ENCODE measurements at regions of chr10 and their contacts with region 1.

Region 1: GRCh38 chr10:21278491-21279239 is 246.8 kb downstream of the SKIDA1 start:
- DNase-seq: peak in 1 of 2 donors; percentile 91
- H3K4me3 ChIP-seq: no peak overlapping the region
- H3K27ac ChIP-seq: no peak overlapping the region
- H3K4me1 ChIP-seq: no peaks in the 10 kb centered on the region
- H3K27me3 ChIP-seq: no peaks in the 10 kb centered on the region
- CTCF ChIP-seq: peak; percentile 35 to 78 (median 69)
- POLR2A ChIP-seq: no peak

Region 2: GRCh38 chr10:20858292-20859124 is 420.2 kb before region 1 on chr10:
- intact Hi-C with region 1: loop called (anchors 10 kb)
- DNase-seq: no peak
- H3K4me3 ChIP-seq: no peak overlapping the region
- H3K27ac ChIP-seq: no peak overlapping the region
- H3K4me1 ChIP-seq: no peaks in the 10 kb centered on the region
- H3K27me3 ChIP-seq: no peaks in the 10 kb centered on the region
- CTCF ChIP-seq: peak in 2 of 3 experiments; percentile 28 to 33
- POLR2A ChIP-seq: no peak

Measured in vagina (tissue), 2 donors.